ENCODE measurements at regions of chr11 and their contacts with region 1.

Region 1: GRCh38 chr11:108121274-108122155 is at the start of gene ACAT1:
- DNase-seq: peak; percentile 93

Region 2: GRCh38 chr11:108222686-108223448 is 101.4 kb after region 1 on chr11 and contains the start of gene ATM:
- CTCF ChIA-PET with region 1: no interaction called
- POLR2A ChIA-PET with region 1: interaction called, 10 read pairs
- DNase-seq: peak; percentile 96